Dorsolateral prefrontal cortex (tissue), 120 donors: ENCODE measurements at regions of chr5 and their contacts with region 1.

Region 1: DNA sequence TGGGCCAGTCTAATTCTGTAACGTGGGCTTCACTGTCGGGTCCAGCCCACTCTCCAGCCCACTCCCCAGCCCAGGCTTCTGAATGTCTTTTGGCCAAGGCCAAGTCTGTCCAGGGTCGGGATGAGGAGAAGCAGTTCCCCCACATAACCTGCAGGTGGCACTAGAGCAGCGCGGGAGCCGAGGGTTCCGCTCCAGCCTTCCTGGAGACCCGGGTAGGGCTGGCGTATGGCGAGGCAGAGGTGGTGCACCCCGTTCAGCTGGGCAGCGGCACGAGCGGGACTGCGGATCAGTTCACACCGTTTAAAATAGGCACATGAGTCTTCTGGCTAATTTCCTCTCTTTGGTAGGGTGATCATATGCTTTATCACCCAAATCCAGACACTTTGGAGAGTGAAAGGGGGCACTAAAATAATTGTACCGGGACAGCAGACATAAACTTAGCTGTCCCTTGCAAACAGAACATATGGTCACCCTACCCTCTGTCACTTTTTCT is 185.9 kb downstream of the MSX2 start:
- DNase-seq: peak; percentile 25 to 86 (median 69)
- H3K4me3 ChIP-seq: peak overlapping the region in 54 of 59 donors; percentile 0 to 62 (median 38)
- H3K27ac ChIP-seq: peak overlapping the region in 1 of 59 donors; percentile 11
- H3K27me3 ChIP-seq: no peaks in the 10 kb centered on the region
- CTCF ChIP-seq: peak; percentile 82 to 98 (median 94)

Region 2: GRCh38 chr5:174642488-174643291 is 267.6 kb before region 1 on chr5:
- intact Hi-C with region 1: no loop called
- DNase-seq: no peak
- H3K4me3 ChIP-seq: no peak overlapping the region
- H3K27ac ChIP-seq: no peak overlapping the region
- H3K27me3 ChIP-seq: peaks cover 0 to 2% (median 0%) of the 10 kb centered on the region in 45 donors
- CTCF ChIP-seq: no peak

Region 3: GRCh38 chr5:174843263-174844250 is 66.7 kb before region 1 on chr5:
- intact Hi-C with region 1: loop called in 1 of 2 experiments (anchors 5 kb)
- DNase-seq: no peak
- H3K4me3 ChIP-seq: no peak overlapping the region
- H3K27ac ChIP-seq: no peak overlapping the region
- H3K27me3 ChIP-seq: peaks cover 0 to 5% (median 0%) of the 10 kb centered on the region in 45 donors
- CTCF ChIP-seq: no peak

Region 4: GRCh38 chr5:175444060-175444904 is 534.0 kb after region 1 on chr5 and contains the start of gene DRD1:
- intact Hi-C with region 1: loop called in 1 of 2 experiments (anchors 2 kb)
- DNase-seq: peak in 7 of 10 donors; percentile 21 to 82 (median 47)
- H3K4me3 ChIP-seq: peak within 1 kb of the TSS; percentile 29 to 74 (median 58)
- H3K27ac ChIP-seq: peak within 1 kb of the TSS in 57 of 59 donors; percentile 12 to 89 (median 73)
- H3K27me3 ChIP-seq: peaks cover 0 to 40% (median 5%) of the 10 kb centered on the region in 45 donors
- CTCF ChIP-seq: peak; percentile 36 to 96 (median 82)
- total RNA-seq, gene DRD1: 3.7 to 17.9 (median 10.7) TPM

Region 5: GRCh38 chr5:175489693-175490443 is 579.6 kb after region 1 on chr5:
- intact Hi-C with region 1: no loop called
- DNase-seq: no peak
- H3K4me3 ChIP-seq: no peak overlapping the region
- H3K27ac ChIP-seq: no peak overlapping the region
- H3K27me3 ChIP-seq: no peaks in the 10 kb centered on the region
- CTCF ChIP-seq: no peak